Ovary (tissue), 10 donors: ENCODE measurements at regions of chr9 and their contacts with region 1.

Region 1: GRCh38 chr9:100455470-100455869 is 17.5 kb upstream of the TMEFF1 start:
- DNase-seq: no peak
- H3K4me3 ChIP-seq: no peak overlapping the region
- H3K27ac ChIP-seq: no peak overlapping the region
- H3K4me1 ChIP-seq: no peaks in the 10 kb centered on the region
- H3K27me3 ChIP-seq: no peaks in the 10 kb centered on the region
- CTCF ChIP-seq: no peak
- EP300 ChIP-seq: no peak
- POLR2A ChIP-seq: no peak

Region 2: DNA sequence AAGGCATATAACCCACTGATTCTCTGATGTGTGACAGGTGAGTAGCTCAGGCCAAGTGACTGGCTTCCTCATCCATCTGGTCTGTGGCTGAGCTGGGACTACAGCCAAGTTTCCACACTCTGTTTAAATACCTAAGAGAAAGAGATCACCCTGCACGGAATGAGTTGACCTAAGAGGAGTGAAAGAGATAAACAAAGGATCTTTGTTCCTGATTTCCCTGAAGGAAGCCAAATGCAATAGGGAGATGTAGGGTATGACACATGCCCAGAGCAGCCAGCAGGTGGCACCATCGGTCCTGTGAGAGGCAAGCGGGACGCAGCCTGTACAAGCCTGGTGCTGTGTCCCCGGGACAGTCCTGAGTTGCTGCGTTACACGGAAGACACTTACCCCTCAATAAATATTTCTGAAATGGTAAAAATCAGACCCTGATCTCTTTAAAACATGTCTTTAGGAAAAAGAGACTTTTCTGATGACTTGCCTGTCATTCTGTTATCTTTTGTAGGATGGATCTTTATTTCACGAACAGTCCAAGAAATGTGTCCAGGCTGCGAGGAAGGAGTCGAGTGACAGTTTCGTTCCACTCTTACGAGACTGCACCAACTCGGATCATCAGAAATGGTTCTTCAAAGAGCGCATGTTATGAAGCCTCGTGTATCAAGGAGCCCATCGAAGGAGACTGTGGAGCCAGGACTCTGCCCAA is 1606.9 kb before region 1 on chr9:
- intact Hi-C with region 1: loop called in 1 of 4 experiments (anchors 5 kb)
- DNase-seq: peak; percentile 86 to 93 (median 90)
- H3K4me3 ChIP-seq: peak overlapping the region; percentile 16
- H3K27ac ChIP-seq: no peak overlapping the region
- H3K4me1 ChIP-seq: no peaks in the 10 kb centered on the region
- H3K27me3 ChIP-seq: no peaks in the 10 kb centered on the region
- CTCF ChIP-seq: peak; percentile 77 to 86 (median 79)
- EP300 ChIP-seq: no peak
- POLR2A ChIP-seq: no peak

Region 3: GRCh38 chr9:100486479-100487176 is 31.2 kb after region 1 on chr9:
- intact Hi-C with region 1: loop called in 1 of 4 experiments (anchors 2 kb)
- DNase-seq: no peak
- H3K4me3 ChIP-seq: no peak overlapping the region
- H3K27ac ChIP-seq: no peak overlapping the region
- H3K4me1 ChIP-seq: no peaks in the 10 kb centered on the region
- H3K27me3 ChIP-seq: no peaks in the 10 kb centered on the region
- CTCF ChIP-seq: no peak
- EP300 ChIP-seq: no peak
- POLR2A ChIP-seq: no peak

Region 4: GRCh38 chr9:100505564-100506159 is 50.2 kb after region 1 on chr9:
- intact Hi-C with region 1: no loop called
- DNase-seq: peak in 3 of 5 donors; percentile 21 to 38 (median 24)
- H3K4me3 ChIP-seq: no peak overlapping the region
- H3K27ac ChIP-seq: no peak overlapping the region
- H3K4me1 ChIP-seq: no peaks in the 10 kb centered on the region
- H3K27me3 ChIP-seq: no peaks in the 10 kb centered on the region
- CTCF ChIP-seq: no peak
- EP300 ChIP-seq: no peak
- POLR2A ChIP-seq: no peak

Region 5: DNA sequence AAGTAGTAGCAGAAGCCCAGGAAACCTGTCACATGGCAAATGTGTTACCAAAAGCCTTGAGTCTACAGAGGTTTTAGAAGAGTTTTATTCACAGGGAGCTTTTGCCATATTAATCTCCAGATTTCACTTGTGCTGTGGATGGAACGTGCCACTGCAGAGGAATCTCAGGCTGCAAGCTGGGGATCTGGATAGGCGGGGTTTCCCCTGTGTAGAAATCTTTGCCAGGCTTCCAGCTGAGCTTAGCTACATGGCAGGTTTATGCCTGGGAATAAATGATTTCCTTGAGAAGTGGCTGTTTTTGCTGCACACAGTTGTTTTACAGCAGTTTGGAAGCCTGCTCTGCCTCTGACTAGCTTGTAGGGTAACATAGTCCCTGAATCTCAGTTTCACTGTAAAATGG is 348.5 kb after region 1 on chr9:
- intact Hi-C with region 1: loop called in 1 of 4 experiments (anchors 5 kb)
- DNase-seq: no peak
- H3K4me3 ChIP-seq: no peak overlapping the region
- H3K27ac ChIP-seq: no peak overlapping the region
- H3K4me1 ChIP-seq: no peaks in the 10 kb centered on the region
- H3K27me3 ChIP-seq: no peaks in the 10 kb centered on the region
- CTCF ChIP-seq: no peak
- EP300 ChIP-seq: no peak
- POLR2A ChIP-seq: no peak